HAP-1 (cell line): ENCODE measurements at regions of chr1 and their contacts with region 1.

Region 1: GRCh38 chr1:18581420-18581880 is 49.2 kb upstream of the PAX7 start:
- DNase-seq: peak; percentile 12 to 74
- H3K4me3 ChIP-seq: no peak overlapping the region
- H3K4me1 ChIP-seq: no peaks in the 10 kb centered on the region
- H3K27me3 ChIP-seq: peaks cover under 1% of the 10 kb centered on the region; the same call in 1 of the 2 replicates

Region 2: GRCh38 chr1:17984583-17984982 is 596.9 kb before region 1 on chr1:
- in situ Hi-C with region 1: loop called (anchors 10 kb)
- DNase-seq: peak; percentile 5 to 70
- H3K4me3 ChIP-seq: no peak overlapping the region
- H3K4me1 ChIP-seq: no peaks in the 10 kb centered on the region
- H3K27me3 ChIP-seq: no peaks in the 10 kb centered on the region

Region 3: GRCh38 chr1:18344755-18345154 is 236.7 kb before region 1 on chr1:
- in situ Hi-C with region 1: no loop called
- DNase-seq: peak in 1 of 2 experiments; percentile 45
- H3K4me3 ChIP-seq: no peak overlapping the region
- H3K4me1 ChIP-seq: peaks cover 4% of the 10 kb centered on the region
- H3K27me3 ChIP-seq: no peaks in the 10 kb centered on the region